Right ventricle myocardium inferior (tissue), 1 donor: ENCODE measurements at regions of chr1 and their contacts with region 1.

Region 1: DNA sequence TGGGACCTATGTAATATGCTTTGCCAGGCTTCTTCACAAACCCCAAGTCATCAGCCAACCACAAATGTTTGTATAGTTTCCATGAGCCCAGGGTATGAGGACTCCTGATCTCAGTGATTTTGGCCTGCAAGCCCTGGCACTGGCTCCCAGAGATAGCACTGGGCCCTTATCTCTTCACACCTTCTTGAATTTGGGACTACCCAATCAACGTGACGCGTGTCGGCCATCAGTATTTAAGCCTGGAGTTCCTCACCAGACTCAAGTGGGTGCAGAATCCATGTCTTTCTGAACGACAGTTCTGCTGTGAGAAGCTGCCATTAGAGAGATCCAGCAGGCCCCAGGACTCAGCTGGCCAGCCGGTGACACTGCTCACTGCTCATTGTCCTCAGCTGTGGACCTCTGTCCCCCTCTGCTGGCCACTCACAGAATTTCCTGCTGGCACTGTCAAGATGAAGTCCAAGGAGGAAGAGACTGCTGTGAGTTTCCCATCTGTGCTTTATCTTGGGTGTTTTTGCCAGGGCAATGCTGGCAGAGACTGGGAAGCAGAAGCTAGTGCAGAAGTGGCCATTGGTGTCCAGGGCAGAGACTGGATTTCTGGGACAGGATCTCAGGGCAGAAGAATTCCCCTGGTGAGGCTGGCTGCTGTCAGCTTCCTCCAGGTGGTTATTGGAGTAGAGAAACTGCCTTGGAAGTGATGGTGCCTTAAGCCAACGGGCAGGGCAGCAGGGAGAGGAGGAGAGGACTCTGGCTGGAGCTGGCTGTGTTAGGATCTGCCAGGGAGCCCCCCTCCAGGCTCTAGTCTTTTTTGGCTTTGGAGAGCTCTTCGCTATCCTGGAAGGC is 28.4 kb downstream of the TMCC2 start:
- DNase-seq: peak; percentile 92
- ATAC-seq: peak; percentile 93

Region 2: GRCh38 chr1:204975570-204976235 is 280.5 kb before region 1 on chr1:
- intact Hi-C with region 1: loop called (anchors 5 kb)
- DNase-seq: no peak
- ATAC-seq: peak; percentile 67

Region 3: DNA sequence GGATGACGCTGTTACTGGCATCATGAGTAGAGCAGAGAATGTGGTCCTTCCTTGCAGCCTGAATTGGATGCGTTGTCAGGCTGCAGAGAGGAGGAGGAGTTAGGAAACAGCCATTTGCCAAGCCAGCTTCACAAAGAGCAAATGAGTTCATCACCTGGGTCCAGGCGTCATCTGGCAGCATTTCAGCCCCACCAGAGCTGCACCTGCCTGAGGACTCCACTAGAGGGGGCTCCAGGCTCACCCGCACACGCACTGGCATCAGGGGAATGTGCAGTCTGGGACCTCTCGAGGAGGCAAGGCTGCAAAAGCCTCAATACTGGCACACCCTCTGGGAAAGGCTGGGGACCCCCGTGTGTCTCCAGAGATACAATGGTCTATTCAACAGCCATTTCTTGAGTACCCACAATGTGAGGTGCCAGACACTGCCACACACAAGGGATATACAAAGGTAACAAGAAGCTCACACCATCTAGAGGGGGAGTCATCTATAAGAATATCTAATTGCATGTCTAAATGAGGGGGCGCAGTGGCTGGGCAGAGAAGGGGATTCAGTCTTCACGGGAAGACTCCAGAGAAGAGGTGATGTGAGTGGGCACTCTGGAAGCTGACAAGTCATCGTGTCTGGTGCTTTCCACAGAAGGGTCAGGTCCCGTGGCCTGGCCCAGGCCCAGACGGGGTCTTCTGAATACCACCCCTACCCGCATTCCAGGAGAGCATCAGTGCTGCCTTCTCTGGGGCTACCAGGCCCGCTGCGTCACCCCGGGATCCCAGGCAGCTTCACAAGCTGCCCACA is 266.7 kb before region 1 on chr1:
- intact Hi-C with region 1: loop called (anchors 1 kb)
- DNase-seq: peak; percentile 88
- ATAC-seq: peak; percentile 75

Region 4: GRCh38 chr1:205121660-205122488 is 134.3 kb before region 1 on chr1 and contains the start of gene RBBP5:
- intact Hi-C with region 1: loop called (anchors 2 kb)
- DNase-seq: peak; percentile 97
- ATAC-seq: peak; percentile 99
- total RNA-seq, gene RBBP5: 10.0 TPM

Region 5: GRCh38 chr1:205141236-205142101 is 114.7 kb before region 1 on chr1:
- intact Hi-C with region 1: loop called (anchors 5 kb)
- DNase-seq: no peak
- ATAC-seq: peak; percentile 78

Region 6: GRCh38 chr1:205227584-205228006 is 28.6 kb before region 1 on chr1 and contains the start of gene TMCC2:
- intact Hi-C with region 1: loop called (anchors 2 kb)
- DNase-seq: peak; percentile 92
- ATAC-seq: peak; percentile 97
- total RNA-seq, gene TMCC2: 1.2 TPM